Caco-2 (cell line): ENCODE measurements at regions of chr12 and their contacts with region 1.

Region 1: DNA sequence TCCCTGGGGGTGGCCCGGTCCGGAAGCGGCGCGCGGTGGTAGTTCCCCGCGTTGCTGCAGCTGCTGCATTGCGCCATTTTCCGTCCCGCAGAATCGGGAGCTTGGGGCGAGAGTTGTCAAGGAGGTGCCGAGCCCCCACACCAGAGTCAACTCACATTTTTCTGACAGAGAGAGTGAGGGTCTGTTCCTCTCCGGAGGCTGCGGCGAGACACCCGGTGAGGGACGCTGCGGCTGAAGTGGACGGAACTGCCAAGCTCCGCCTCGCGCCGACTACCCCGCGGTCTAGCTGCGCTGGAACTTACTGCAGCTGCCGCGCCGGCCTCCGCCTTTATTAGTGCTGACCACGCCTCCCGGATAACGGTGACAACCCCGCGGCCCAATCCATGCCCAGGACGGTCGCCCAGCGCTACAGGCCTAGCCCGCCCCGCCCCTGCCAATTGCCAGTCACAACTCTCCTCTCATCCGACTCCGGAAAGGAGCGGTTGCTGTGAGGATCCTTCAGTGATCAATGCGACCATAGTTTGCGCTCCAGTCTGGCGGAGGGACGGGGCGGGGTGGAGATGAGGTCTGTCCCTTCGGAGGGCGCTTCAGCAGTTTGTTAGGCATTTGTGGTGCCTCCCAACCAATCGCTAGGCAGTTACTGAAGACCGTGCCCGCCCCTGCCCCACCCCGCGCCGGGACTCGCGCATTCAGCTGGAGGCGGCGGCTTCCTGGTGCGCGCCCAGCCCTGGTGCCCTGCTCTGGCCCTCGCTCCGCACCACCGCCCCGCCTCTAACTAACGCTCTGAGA is at the start of gene VAMP1:
- DNase-seq: peak; percentile 99 to 100
- H3K4me3 ChIP-seq: peak within 1 kb of the TSS; percentile 86
- H3K4me3 Mint-ChIP-seq: peak within 1 kb of the TSS; percentile 78
- H3K27ac Mint-ChIP-seq: peak within 1 kb of the TSS; percentile 64
- H3K4me1 ChIP-seq: no peaks in the 10 kb centered on the region
- H3K4me1 Mint-ChIP-seq: peaks cover 6% of the 10 kb centered on the region
- H3K27me3 ChIP-seq: no peaks in the 10 kb centered on the region
- H3K27me3 Mint-ChIP-seq: no peaks in the 10 kb centered on the region
- CTCF ChIP-seq: no peak
- total RNA-seq, gene VAMP1: 8.4 and 9.7 TPM in 2 replicates

Region 2: DNA sequence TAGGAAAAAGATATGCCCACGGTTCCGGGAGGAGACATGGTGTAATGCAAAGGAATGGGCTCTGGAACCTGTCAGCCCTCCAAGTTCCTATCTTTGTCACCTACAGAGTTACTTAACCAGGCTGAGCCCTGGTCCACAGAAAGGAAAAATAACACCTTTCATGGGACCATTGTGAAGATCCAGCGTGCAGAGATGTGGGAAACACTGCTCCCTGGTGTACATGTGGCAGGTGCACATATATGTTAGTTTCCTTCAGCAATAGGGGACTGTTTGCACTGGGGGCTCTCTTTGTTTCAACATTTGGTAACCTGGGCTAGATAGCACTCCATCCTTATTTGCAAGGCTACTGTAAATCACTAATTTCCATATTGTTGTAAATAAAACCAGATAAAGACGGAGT is 597.8 kb before region 1 on chr12:
- CTCF ChIA-PET with region 1: no interaction called
- POLR2A ChIA-PET with region 1: no interaction called
- intact Hi-C with region 1: no loop called
- DNase-seq: peak in 1 of 2 experiments; percentile 36
- H3K4me3 ChIP-seq: no peak overlapping the region
- H3K4me3 Mint-ChIP-seq: no peak overlapping the region
- H3K27ac Mint-ChIP-seq: no peak overlapping the region
- H3K4me1 ChIP-seq: no peaks in the 10 kb centered on the region
- H3K4me1 Mint-ChIP-seq: no peaks in the 10 kb centered on the region
- H3K27me3 ChIP-seq: peaks cover 2% of the 10 kb centered on the region
- H3K27me3 Mint-ChIP-seq: peaks cover 25% of the 10 kb centered on the region
- CTCF ChIP-seq: peak; percentile 69 to 75

Region 3: DNA sequence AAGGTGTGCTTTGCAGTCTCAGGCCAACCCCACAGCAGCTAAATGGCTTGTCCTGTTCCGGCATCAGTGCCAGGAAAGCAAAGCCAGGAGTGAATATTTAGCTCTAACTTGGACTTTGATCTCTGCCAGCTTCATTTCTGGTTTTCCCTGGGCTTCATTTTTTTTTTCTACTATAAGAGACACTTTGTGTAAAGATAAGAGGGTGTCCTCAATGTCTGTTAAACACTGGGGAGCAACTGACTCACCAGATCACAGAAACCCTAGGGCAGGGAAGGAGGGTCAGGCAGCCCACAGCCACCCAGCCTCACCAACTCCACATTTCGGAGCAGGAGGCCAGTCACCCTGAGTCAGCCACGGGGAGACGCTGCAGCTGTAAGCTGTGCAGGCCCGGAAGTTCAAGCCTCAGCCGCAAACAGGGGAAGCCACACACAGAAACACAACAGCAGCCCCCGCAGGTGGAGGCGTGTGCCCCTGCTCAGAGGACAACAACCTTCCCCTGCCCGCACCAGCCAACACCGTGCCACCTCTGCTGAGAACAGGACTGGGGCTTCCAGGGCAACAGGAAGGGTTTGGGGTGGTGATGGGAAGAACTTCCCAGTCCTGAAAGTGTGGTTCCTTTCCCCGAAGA is 135.0 kb before region 1 on chr12:
- CTCF ChIA-PET with region 1: interaction called, 16 read pairs
- POLR2A ChIA-PET with region 1: interaction called, 19 read pairs
- intact Hi-C with region 1: no loop called
- DNase-seq: peak; percentile 64 to 66
- H3K4me3 ChIP-seq: peak overlapping the region; percentile 15; the same call in 1 of the 2 replicates
- H3K4me3 Mint-ChIP-seq: no peak overlapping the region
- H3K27ac Mint-ChIP-seq: no peak overlapping the region
- H3K4me1 ChIP-seq: peaks cover 48% of the 10 kb centered on the region
- H3K4me1 Mint-ChIP-seq: peaks cover 7% of the 10 kb centered on the region
- H3K27me3 ChIP-seq: no peaks in the 10 kb centered on the region
- H3K27me3 Mint-ChIP-seq: no peaks in the 10 kb centered on the region
- CTCF ChIP-seq: peak in 1 of 2 experiments; percentile 56

Region 4: DNA sequence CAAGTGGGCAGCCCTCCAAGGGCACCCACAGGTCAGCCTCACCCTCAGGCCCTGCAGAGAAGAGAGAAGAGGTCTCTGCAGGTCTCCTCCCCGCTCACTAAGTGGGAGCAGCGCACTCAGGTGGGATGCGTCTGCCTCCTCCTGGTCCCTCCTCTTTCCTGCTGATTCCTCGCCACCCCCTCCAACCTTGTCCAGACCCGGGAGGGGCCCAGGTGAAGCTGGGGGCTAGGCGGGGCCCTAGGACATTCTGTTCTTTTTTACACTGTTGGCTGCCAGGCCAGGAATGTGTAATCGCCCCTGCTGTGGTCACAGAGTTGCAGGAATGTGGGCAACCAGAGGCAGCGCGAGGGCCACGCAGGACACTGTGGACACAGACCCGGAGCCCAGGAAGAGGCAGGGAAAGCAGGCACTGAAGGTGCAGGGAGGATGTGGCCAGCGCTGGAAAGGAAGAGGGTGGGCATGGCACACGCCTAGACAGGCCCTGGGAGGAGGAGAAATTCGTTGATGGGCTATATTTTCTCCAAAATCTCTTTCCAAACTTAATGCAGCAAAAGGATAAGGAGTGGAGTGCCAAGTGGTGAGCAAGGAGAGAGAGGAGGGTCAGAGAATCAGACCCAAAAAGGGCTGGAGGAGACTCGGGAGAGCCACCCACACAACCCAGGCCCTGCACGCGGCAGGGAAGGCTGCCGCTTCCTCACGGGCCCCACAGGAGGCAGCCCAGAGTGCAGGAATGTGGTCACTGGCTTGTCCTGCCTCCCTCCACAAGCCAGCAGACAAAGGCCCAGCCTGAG is 94.3 kb before region 1 on chr12:
- CTCF ChIA-PET with region 1: interaction called, 18 read pairs
- POLR2A ChIA-PET with region 1: interaction called, 3 read pairs
- intact Hi-C with region 1: no loop called
- DNase-seq: peak; percentile 88 to 89
- H3K4me3 ChIP-seq: no peak overlapping the region
- H3K4me3 Mint-ChIP-seq: peak overlapping the region; percentile 72
- H3K27ac Mint-ChIP-seq: peak overlapping the region; percentile 94
- H3K4me1 ChIP-seq: peaks cover 68% of the 10 kb centered on the region
- H3K4me1 Mint-ChIP-seq: peaks cover 51% of the 10 kb centered on the region
- H3K27me3 ChIP-seq: no peaks in the 10 kb centered on the region
- H3K27me3 Mint-ChIP-seq: no peaks in the 10 kb centered on the region
- CTCF ChIP-seq: peak; percentile 69 to 71

Region 5: GRCh38 chr12:6434205-6435140 is 36.1 kb before region 1 on chr12:
- CTCF ChIA-PET with region 1: interaction called, 11 read pairs
- POLR2A ChIA-PET with region 1: interaction called, 4 read pairs
- intact Hi-C with region 1: no loop called
- DNase-seq: peak in 1 of 2 experiments; percentile 30
- H3K4me3 ChIP-seq: no peak overlapping the region
- H3K4me3 Mint-ChIP-seq: no peak overlapping the region
- H3K27ac Mint-ChIP-seq: no peak overlapping the region
- H3K4me1 ChIP-seq: peaks cover 12% of the 10 kb centered on the region; the same call in 1 of the 2 replicates
- H3K4me1 Mint-ChIP-seq: peaks cover 11% of the 10 kb centered on the region
- H3K27me3 ChIP-seq: no peaks in the 10 kb centered on the region
- H3K27me3 Mint-ChIP-seq: no peaks in the 10 kb centered on the region
- CTCF ChIP-seq: no peak

Region 6: DNA sequence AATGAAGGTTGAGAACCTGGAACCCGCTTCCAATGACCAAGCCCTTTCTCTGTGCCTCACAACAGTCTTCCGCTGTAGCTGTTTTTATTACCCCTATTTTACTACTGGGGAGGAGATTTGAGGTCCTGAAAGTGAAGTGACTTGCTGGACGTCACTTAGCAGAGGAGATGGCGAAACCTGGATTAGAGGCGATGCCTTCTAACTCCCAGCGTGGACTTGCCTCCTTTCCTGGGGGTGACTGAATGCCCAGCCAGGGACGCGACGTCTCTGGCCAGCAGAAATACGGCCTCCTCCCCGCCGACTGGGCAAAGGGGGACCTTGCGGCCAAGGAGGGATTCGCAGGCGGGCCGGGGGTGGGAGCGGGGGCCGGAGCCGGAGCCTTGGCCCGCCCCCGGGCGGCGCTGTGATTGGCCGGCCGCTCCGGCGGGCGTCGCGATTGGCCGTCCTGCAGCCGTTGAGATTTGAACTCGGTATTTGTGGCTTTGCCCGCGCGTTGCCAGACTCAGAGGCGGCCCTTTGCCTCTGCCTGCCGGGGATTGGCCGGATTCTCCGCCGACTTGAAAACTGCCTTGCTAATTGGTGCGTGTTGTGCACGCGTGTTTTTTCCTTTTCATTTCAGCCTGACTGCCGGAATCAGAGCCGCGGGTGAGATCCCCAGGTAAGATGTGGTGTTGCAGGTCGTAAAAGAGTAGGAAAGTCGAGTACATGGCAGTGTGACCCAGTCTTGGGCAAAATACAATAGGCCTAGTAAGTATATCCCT is 23.1 kb after region 1 on chr12 and contains the start of gene NCAPD2:
- CTCF ChIA-PET with region 1: interaction called, 3 read pairs
- POLR2A ChIA-PET with region 1: interaction called, 52 read pairs
- intact Hi-C with region 1: loop called (anchors 1 kb)
- DNase-seq: peak; percentile 98 to 99
- H3K4me3 ChIP-seq: peak within 1 kb of the TSS; percentile 81
- H3K4me3 Mint-ChIP-seq: peak within 1 kb of the TSS; percentile 92
- H3K27ac Mint-ChIP-seq: peak within 1 kb of the TSS; percentile 96
- H3K4me1 ChIP-seq: peaks cover 12% of the 10 kb centered on the region
- H3K4me1 Mint-ChIP-seq: peaks cover 10% of the 10 kb centered on the region
- H3K27me3 ChIP-seq: no peaks in the 10 kb centered on the region
- H3K27me3 Mint-ChIP-seq: no peaks in the 10 kb centered on the region
- CTCF ChIP-seq: peak in 1 of 2 experiments; percentile 17
- total RNA-seq, gene NCAPD2: 204 and 218 TPM in 2 replicates

Region 7: DNA sequence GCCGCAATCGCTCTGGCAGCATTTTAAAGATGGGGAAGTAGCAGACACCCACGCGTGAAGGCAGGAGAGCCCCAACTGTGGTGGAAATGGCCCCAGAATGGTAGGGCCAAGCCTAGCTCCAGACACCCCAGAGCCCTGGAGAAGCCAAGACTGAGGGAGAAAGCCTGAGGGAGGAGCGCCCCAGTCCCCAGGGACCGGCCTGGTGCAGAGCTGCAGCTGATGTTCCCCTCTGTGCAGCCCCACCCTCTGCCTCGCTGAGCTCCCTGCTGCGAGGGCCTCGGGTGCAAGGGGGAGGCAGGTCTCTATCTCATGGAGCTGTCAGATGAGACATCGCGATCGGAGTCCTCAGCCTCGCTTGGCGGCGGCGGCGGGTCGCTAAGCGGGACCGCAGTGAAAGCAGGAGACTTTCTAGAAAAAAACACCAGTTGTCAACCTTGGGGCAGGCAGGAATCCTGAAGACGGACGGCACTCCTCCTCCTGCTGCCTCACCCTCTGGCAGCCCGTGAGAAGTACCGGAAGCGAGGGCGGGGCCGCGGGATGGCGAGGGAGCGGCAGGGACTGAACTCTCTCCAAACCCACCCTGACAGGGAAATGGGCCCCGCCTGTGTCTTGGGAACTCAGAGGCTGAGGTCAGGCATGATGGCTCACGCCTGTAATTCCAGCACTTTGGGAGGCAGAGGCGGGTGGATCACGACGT is 69.8 kb after region 1 on chr12:
- CTCF ChIA-PET with region 1: interaction called, 19 read pairs
- POLR2A ChIA-PET with region 1: interaction called, 57 read pairs
- intact Hi-C with region 1: no loop called
- DNase-seq: peak; percentile 66 to 81
- H3K4me3 ChIP-seq: no peak overlapping the region
- H3K4me3 Mint-ChIP-seq: peak overlapping the region; percentile 71
- H3K27ac Mint-ChIP-seq: peak overlapping the region; percentile 97
- H3K4me1 ChIP-seq: peaks cover 31% of the 10 kb centered on the region
- H3K4me1 Mint-ChIP-seq: peaks cover 42% of the 10 kb centered on the region
- H3K27me3 ChIP-seq: no peaks in the 10 kb centered on the region
- H3K27me3 Mint-ChIP-seq: no peaks in the 10 kb centered on the region
- CTCF ChIP-seq: no peak